ENCODE measurements at regions of chr7 and their contacts with region 1.

Region 1: DNA sequence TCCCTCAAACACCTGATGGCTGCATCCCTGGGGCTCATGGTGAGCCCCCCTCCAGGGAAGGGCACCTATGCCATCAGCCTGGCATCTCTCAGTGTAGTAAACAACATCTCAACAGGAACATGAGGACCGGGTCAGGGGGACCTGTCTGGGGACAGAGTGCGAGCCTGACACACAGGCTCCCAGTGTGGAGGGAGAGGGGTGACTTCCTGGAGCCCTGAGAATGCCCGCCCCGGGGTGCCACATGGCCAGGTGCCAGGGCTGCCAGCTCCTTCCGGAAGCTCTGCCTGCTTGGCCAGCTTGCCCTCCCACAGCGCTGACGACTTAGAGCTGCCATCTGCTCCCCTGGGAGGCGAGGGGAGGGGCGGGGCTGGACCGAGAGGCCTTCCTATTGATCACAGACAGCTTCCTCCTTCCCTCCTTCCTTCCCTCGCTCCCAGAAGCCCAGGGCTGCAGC is 12.3 kb downstream of the STX1A start:
- DNase-seq: no peak
- ATAC-seq: peak; percentile 30
- H3K4me3 ChIP-seq: peak overlapping the region in 1 of 2 experiments; percentile 4; a peak in 1 of 4 replicates
- H3K27ac ChIP-seq: peak overlapping the region; percentile 93
- H3K4me1 ChIP-seq: peaks cover 87% of the 10 kb centered on the region
- H3K27me3 ChIP-seq: no peaks in the 10 kb centered on the region
- CTCF ChIP-seq: no peak

Region 2: DNA sequence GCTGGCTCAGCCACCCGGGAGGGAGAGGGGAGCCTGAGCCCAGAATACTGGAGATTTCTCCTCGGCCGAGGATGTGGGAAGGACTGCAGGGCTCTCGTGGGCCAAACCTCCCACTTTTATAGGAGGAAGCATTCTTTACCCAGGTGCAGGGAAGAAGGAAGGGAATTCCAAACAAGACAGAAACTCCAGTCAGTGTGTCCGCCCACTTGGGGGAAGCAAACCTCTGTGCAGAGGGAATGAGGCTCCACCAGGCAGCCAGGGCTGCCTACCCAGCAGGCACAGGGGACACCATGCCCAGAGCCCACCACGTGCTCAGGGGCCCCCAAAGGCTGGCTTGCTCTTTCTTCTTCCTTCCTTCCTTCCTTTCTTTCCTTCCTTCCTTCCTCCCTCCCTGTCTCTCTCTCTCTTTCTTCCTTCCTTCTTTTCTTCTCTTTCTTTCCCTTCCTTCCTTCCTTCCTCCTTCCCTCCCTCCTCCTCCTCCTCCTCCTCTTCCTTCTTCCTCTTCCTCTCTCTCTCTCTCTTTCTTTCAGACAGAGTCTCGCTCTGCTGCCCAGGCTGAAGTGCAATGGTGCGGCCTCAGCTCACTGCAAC is 289.0 kb before region 1 on chr7:
- CTCF ChIA-PET with region 1: no interaction called
- POLR2A ChIA-PET with region 1: no interaction called
- in situ Hi-C with region 1: no loop called
- intact Hi-C with region 1: no loop called
- DNase-seq: no peak
- ATAC-seq: 0 out of 2 replicates have a peak, but pooled peaks have one; percentile 29
- H3K4me3 ChIP-seq: no peak overlapping the region
- H3K27ac ChIP-seq: no peak overlapping the region
- H3K4me1 ChIP-seq: no peaks in the 10 kb centered on the region
- H3K27me3 ChIP-seq: no peaks in the 10 kb centered on the region
- CTCF ChIP-seq: no peak

Region 3: GRCh38 chr7:73578342-73579127 is 128.6 kb before region 1 on chr7 and contains the start of gene TBL2:
- CTCF ChIA-PET with region 1: interaction called, 12 read pairs
- POLR2A ChIA-PET with region 1: no interaction called
- in situ Hi-C with region 1: no loop called
- intact Hi-C with region 1: no loop called
- DNase-seq: peak; percentile 94
- ATAC-seq: peak; percentile 95
- H3K4me3 ChIP-seq: peak within 1 kb of the TSS; percentile 73 to 99
- H3K27ac ChIP-seq: peak within 1 kb of the TSS; percentile 91
- H3K4me1 ChIP-seq: peaks cover 12% of the 10 kb centered on the region
- H3K27me3 ChIP-seq: no peaks in the 10 kb centered on the region
- CTCF ChIP-seq: no peak
- total RNA-seq, gene TBL2: 60.1 TPM

Region 4: GRCh38 chr7:73618538-73618937 is 88.6 kb before region 1 on chr7:
- CTCF ChIA-PET with region 1: no interaction called
- POLR2A ChIA-PET with region 1: interaction called, 24 read pairs
- in situ Hi-C with region 1: no loop called
- intact Hi-C with region 1: no loop called
- DNase-seq: no peak
- ATAC-seq: no peak
- H3K4me3 ChIP-seq: no peak overlapping the region
- H3K27ac ChIP-seq: no peak overlapping the region
- H3K4me1 ChIP-seq: peaks cover 3% of the 10 kb centered on the region; the same call in 1 of the 2 replicates
- H3K27me3 ChIP-seq: no peaks in the 10 kb centered on the region
- CTCF ChIP-seq: no peak

Region 5: DNA sequence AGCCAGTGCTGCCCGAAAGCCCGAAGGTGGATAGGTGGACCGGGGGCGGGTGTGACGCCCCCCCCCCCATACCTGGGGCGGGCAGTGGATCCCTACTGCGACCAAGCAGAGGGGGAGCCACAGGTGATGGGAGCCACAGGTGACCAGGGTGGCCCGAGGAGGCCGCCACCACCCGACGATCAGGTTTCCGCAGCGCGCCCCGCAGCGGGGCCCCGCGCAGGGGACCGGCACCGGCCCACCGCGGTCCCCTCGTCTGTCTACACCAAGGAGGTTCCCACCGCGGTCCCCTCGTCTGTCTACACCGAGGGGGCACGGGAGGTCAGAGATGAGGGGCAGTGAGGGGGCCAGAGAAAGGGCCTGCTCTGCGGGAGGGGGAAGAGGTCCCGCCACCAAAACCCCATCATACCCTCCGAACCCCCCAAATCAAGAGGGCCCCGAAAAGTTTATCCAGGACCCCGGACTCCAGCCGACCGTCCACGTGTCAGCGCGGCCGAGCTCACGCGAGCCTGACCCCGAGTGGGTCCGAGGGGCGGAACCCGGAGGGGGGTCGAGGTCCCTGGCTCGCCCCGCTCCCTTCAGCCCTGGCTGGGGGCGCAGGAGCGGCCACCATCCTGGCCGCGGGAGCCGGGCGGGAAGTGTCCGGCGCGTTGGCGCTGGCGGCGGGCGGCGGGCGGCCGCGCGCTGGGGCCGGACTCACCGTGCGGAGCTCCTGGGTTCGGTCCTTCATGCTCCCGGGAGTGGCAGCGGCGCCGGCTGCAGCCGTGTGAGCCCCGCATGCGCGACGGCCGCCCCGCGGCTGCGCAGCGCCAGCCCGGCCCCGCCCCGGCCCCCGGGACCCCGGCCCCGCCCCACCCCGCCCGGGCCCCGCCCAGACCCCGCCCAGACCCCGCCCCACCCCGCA is 12.0 kb after region 1 on chr7 and contains the start of gene STX1A:
- CTCF ChIA-PET with region 1: interaction called, 4 read pairs
- POLR2A ChIA-PET with region 1: interaction called, 19 read pairs
- in situ Hi-C with region 1: no loop called
- intact Hi-C with region 1: no loop called
- DNase-seq: no peak
- ATAC-seq: peak; percentile 63
- H3K4me3 ChIP-seq: peak within 1 kb of the TSS; percentile 82 to 96
- H3K27ac ChIP-seq: peak within 1 kb of the TSS; percentile 96
- H3K4me1 ChIP-seq: peaks cover 62% of the 10 kb centered on the region
- H3K27me3 ChIP-seq: no peaks in the 10 kb centered on the region
- CTCF ChIP-seq: no peak
- total RNA-seq, gene STX1A: 80.9 TPM

Region 6: DNA sequence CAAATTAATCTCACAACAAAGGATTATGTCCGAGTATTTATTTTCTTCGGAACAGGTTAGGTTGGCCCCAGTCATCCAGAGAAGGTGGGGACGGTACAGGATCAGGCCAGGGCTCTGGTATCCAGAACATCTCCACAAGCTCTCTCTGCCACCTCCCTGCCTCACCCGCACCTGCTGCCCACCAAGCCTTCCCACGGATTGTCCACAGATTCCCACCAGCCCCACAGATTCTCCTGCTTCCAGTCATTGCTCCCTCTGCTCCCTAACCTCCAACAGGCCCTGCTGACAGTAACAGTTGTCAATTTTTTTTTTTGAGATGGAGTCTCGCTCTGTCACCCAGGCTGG is 36.4 kb after region 1 on chr7:
- CTCF ChIA-PET with region 1: no interaction called
- POLR2A ChIA-PET with region 1: no interaction called
- in situ Hi-C with region 1: no loop called
- intact Hi-C with region 1: no loop called
- DNase-seq: no peak
- ATAC-seq: no peak
- H3K4me3 ChIP-seq: no peak overlapping the region
- H3K27ac ChIP-seq: peak overlapping the region; percentile 74
- H3K4me1 ChIP-seq: peaks cover 40% of the 10 kb centered on the region
- H3K27me3 ChIP-seq: no peaks in the 10 kb centered on the region
- CTCF ChIP-seq: no peak

Measured in Panc1 (cell line).